Naive thymus-derived CD4-positive, alpha-beta T cell (primary cell): ENCODE measurements at regions of chr12 and their contacts with region 1.

Region 1: GRCh38 chr12:31659087-31659933 is at the start of gene ETFBKMT:
- DNase-seq: peak; percentile 85 to 95 (median 93)
- ATAC-seq: peak; percentile 99
- H3K4me3 ChIP-seq: peak within 1 kb of the TSS; percentile 85
- H3K4me3 Mint-ChIP-seq: peak within 1 kb of the TSS; percentile 81 to 99 (median 96)
- H3K27ac ChIP-seq: peak within 1 kb of the TSS; percentile 90
- H3K27ac Mint-ChIP-seq: peak within 1 kb of the TSS; percentile 91 to 100 (median 97)
- H3K4me1 ChIP-seq: peaks cover 0 to 10% of the 10 kb centered on the region in 2 donors
- H3K4me1 Mint-ChIP-seq: peaks cover 3 to 36% (median 24%) of the 10 kb centered on the region in 7 donors
- H3K27me3 ChIP-seq: no peaks in the 10 kb centered on the region
- H3K27me3 Mint-ChIP-seq: no peaks in the 10 kb centered on the region
- total RNA-seq, gene ETFBKMT: 0.92 to 2.0 (median 1.9) TPM

Region 2: DNA sequence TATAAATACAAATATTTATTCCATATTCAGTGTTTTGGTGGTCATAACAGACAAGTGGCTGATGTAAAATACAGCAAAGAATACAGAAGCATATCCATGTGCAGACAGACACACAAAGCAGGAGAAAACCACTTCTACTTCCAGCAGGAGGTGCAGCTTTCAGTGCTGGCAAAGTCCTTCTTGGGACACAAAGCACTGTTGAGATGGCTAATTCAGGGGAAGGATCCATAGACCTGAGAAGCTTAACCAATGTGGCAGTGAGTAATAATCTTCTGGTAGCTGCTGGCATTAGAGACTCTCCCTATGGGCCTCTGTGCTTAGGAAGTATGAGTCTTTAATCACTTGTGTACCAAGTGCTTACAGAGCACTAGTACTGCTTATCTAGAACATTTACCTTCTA is 42.7 kb after region 1 on chr12:
- CTCF ChIA-PET with region 1: no interaction called
- POLR2A ChIA-PET with region 1: interaction called, 3 read pairs
- intact Hi-C with region 1: loop called in 1 of 2 experiments (anchors 5 kb)
- DNase-seq: no peak
- ATAC-seq: no peak
- H3K4me3 ChIP-seq: no peak overlapping the region
- H3K4me3 Mint-ChIP-seq: no peak overlapping the region
- H3K27ac ChIP-seq: no peak overlapping the region
- H3K27ac Mint-ChIP-seq: peak overlapping the region in 2 of 9 donors; percentile 24 to 61
- H3K4me1 ChIP-seq: peaks cover 0 to 12% of the 10 kb centered on the region in 2 donors
- H3K4me1 Mint-ChIP-seq: peaks cover 12 to 45% (median 34%) of the 10 kb centered on the region in 7 donors
- H3K27me3 ChIP-seq: no peaks in the 10 kb centered on the region
- H3K27me3 Mint-ChIP-seq: no peaks in the 10 kb centered on the region

Region 3: DNA sequence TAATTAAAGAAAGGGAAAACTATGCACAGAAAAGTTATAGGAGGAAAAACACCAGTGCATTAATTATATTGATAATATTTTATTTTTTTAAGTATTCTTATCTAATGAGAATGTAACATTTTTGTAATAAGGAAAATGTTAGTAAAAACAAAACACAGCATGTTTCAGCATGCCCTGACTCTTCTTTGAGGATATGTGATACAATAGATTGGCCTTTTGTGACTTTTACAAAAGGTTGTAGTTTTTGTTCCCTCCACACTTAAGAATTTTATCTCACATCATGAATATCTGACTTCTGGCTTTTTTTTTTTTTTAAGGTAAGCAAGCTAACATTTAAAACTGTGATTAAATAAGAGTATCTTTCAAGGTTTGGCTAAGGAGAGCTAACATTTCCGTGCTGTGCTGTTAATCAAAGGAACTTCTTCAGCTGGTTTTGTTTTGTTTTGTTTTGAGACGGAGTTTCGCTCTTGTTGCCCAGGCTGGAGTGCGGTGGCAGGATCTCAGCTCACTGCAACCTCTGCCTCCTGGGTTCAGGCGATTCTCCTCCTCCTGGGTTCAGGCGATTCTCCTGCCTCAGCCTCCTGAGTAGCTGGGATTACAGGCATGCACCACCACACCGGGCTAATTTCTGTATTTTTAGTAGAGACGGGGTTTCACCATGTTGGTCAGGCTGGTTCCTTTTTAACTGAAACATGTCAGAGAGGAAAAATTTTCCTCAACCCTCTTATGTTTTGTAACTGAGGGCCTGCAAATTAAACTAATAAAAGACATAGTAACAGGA is 269.1 kb after region 1 on chr12:
- CTCF ChIA-PET with region 1: interaction called, 5 read pairs
- POLR2A ChIA-PET with region 1: interaction called, 3 read pairs
- intact Hi-C with region 1: loop called in 1 of 2 experiments (anchors 1 kb)
- DNase-seq: peak in 8 of 9 donors; percentile 23 to 64 (median 49)
- ATAC-seq: peak; percentile 70
- H3K4me3 ChIP-seq: peak overlapping the region; percentile 26
- H3K4me3 Mint-ChIP-seq: peak overlapping the region; percentile 79 to 94 (median 90)
- H3K27ac ChIP-seq: peak overlapping the region; percentile 62
- H3K27ac Mint-ChIP-seq: peak overlapping the region; percentile 94 to 100 (median 97)
- H3K4me1 ChIP-seq: peaks cover 30 to 42% of the 10 kb centered on the region in 2 donors
- H3K4me1 Mint-ChIP-seq: peaks cover 27 to 58% (median 50%) of the 10 kb centered on the region in 7 donors
- H3K27me3 ChIP-seq: no peaks in the 10 kb centered on the region
- H3K27me3 Mint-ChIP-seq: no peaks in the 10 kb centered on the region

Region 4: GRCh38 chr12:32106517-32107358 is 447.4 kb after region 1 on chr12 and contains the start of gene BICD1:
- CTCF ChIA-PET with region 1: interaction called, 4 read pairs
- POLR2A ChIA-PET with region 1: no interaction called
- intact Hi-C with region 1: loop called (anchors 1 kb)
- DNase-seq: peak; percentile 43 to 84 (median 65)
- ATAC-seq: peak; percentile 90
- H3K4me3 ChIP-seq: peak within 1 kb of the TSS; percentile 90
- H3K4me3 Mint-ChIP-seq: peak within 1 kb of the TSS; percentile 82 to 98 (median 96)
- H3K27ac ChIP-seq: peak within 1 kb of the TSS; percentile 67
- H3K27ac Mint-ChIP-seq: peak within 1 kb of the TSS; percentile 77 to 94 (median 91)
- H3K4me1 ChIP-seq: peaks cover 19 to 22% of the 10 kb centered on the region in 2 donors
- H3K4me1 Mint-ChIP-seq: peaks cover 11 to 42% (median 33%) of the 10 kb centered on the region in 7 donors
- H3K27me3 ChIP-seq: no peaks in the 10 kb centered on the region
- H3K27me3 Mint-ChIP-seq: peaks cover 0 to 13% (median 0%) of the 10 kb centered on the region in 5 donors
- total RNA-seq, gene BICD1: 16.7 to 25.1 (median 18.5) TPM

Region 5: DNA sequence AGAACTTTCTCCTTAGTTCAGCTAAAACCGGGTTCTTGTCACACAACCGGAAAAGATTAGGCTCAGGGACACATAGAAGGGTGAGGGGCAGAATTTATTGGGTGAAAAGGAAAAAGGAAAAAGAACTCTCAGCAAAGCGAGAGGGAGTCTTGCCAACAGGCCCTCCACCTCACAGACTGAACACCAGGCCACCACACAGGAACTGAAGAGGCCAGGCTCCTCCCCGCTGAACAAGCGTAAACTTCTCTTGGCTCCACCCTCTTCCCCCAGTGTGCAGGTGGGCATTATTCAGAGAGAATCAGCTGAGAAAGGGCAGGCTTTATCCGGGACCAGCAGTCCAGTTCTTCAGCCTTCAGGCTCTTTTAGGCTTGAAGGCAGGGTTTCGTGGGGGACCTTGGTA is 614.4 kb after region 1 on chr12:
- CTCF ChIA-PET with region 1: no interaction called
- POLR2A ChIA-PET with region 1: interaction called, 3 read pairs
- intact Hi-C with region 1: loop called in 1 of 2 experiments (anchors 1 kb)
- DNase-seq: peak in 8 of 9 donors; percentile 16 to 69 (median 56)
- ATAC-seq: peak; percentile 94
- H3K4me3 ChIP-seq: peak overlapping the region; percentile 3
- H3K4me3 Mint-ChIP-seq: peak overlapping the region; percentile 66 to 82 (median 74)
- H3K27ac ChIP-seq: peak overlapping the region; percentile 65
- H3K27ac Mint-ChIP-seq: peak overlapping the region; percentile 74 to 99 (median 97)
- H3K4me1 ChIP-seq: peaks cover 0 to 15% of the 10 kb centered on the region in 2 donors
- H3K4me1 Mint-ChIP-seq: peaks cover 13 to 32% (median 29%) of the 10 kb centered on the region in 7 donors
- H3K27me3 ChIP-seq: no peaks in the 10 kb centered on the region
- H3K27me3 Mint-ChIP-seq: no peaks in the 10 kb centered on the region

Region 6: DNA sequence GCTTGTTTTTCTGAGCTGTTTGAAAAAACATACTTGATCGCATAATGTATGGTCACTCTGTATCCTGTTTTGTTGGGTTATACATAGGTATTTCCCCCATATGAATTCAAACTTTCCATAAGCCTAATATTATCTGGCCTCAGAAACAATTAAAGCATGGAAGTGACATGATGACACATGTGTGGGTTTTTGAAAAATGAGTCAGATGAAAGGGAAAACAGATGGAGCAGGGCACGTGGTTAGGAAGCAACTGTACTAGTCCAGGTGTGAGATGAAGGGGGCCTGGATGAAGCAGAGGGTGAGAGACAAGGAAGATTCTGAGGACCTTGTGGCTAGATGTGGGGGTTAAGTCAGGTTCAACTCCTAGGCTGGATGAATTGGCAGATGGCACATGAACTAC is 927.1 kb after region 1 on chr12:
- CTCF ChIA-PET with region 1: no interaction called
- POLR2A ChIA-PET with region 1: no interaction called
- intact Hi-C with region 1: loop called in 1 of 2 experiments (anchors 10 kb)
- DNase-seq: no peak
- ATAC-seq: no peak
- H3K4me3 ChIP-seq: no peak overlapping the region
- H3K4me3 Mint-ChIP-seq: peak overlapping the region in 2 of 10 donors; percentile 3 to 46
- H3K27ac ChIP-seq: no peak overlapping the region
- H3K27ac Mint-ChIP-seq: peak overlapping the region in 3 of 9 donors; percentile 1 to 63 (median 40)
- H3K4me1 ChIP-seq: peaks cover 0 to 9% of the 10 kb centered on the region in 2 donors
- H3K4me1 Mint-ChIP-seq: peaks cover 22 to 58% (median 33%) of the 10 kb centered on the region in 7 donors
- H3K27me3 ChIP-seq: no peaks in the 10 kb centered on the region
- H3K27me3 Mint-ChIP-seq: no peaks in the 10 kb centered on the region

Region 7: GRCh38 chr12:32975122-32975521 is 1315.8 kb after region 1 on chr12:
- CTCF ChIA-PET with region 1: no interaction called
- POLR2A ChIA-PET with region 1: no interaction called
- intact Hi-C with region 1: no loop called
- DNase-seq: no peak
- ATAC-seq: no peak
- H3K4me3 ChIP-seq: no peak overlapping the region
- H3K4me3 Mint-ChIP-seq: no peak overlapping the region
- H3K27ac ChIP-seq: no peak overlapping the region
- H3K27ac Mint-ChIP-seq: no peak overlapping the region
- H3K4me1 ChIP-seq: no peaks in the 10 kb centered on the region
- H3K4me1 Mint-ChIP-seq: no peaks in the 10 kb centered on the region
- H3K27me3 ChIP-seq: no peaks in the 10 kb centered on the region
- H3K27me3 Mint-ChIP-seq: peaks cover 0 to 11% (median 0%) of the 10 kb centered on the region in 5 donors